ENCODE measurements at regions of chr12 and their contacts with region 1.

Region 1: DNA sequence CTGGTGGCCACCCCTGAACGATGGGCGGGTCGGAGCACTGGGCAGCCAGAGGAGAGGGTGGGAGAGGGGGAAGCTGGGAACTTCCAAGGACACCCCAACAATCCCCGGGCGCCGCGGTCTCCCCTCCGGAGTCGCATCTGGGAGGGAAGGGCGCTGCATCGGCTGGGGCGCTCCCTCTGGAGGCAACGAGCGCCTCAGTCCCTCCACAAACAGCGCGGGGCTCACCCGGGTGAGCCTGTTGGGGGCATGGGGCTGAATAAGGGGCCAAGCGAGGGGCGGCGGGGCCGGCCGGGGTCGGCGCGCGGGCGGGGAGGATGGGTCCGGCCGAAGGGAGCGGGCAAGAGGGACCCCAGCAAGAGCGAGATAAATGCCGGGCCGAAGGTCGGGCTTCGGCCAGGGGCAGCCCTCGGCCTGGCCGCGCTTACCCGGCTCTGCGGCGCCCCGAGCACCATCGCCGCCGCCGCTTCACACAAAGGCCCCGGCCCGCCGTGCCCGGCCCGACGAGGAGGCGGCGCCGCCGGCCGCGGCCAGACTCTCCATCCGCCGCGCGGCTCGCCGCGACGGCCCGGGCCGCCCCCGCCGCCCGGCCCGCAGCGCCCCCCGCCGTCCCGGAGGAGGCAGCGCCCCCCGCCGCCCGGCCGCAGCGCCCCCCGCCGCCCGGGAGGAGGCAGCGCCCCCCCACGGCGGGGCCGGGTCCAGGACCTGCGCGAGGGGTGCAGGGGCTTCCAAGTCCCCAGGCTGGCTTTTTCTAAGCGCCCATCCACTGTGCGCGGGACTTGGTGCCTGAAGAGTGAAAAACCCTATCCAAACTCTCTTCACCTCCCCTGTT is at the start of gene ZBTB39:
- DNase-seq: peak; percentile 55
- H3K4me3 Mint-ChIP-seq: peak within 1 kb of the TSS; percentile 90
- H3K27ac Mint-ChIP-seq: peak within 1 kb of the TSS; percentile 87
- H3K4me1 Mint-ChIP-seq: peaks cover 61% of the 10 kb centered on the region
- H3K27me3 Mint-ChIP-seq: no peaks in the 10 kb centered on the region
- total RNA-seq, gene ZBTB39: 8.8 to 9.5 TPM

Region 2: GRCh38 chr12:56751712-56752598 is 254.2 kb before region 1 on chr12 and contains the start of gene PRIM1:
- CTCF ChIA-PET with region 1: interaction called, 11 read pairs
- POLR2A ChIA-PET with region 1: no interaction called
- DNase-seq: peak; percentile 88
- H3K4me3 Mint-ChIP-seq: peak within 1 kb of the TSS; percentile 98
- H3K27ac Mint-ChIP-seq: peak within 1 kb of the TSS; percentile 99
- H3K4me1 Mint-ChIP-seq: peaks cover 54% of the 10 kb centered on the region
- H3K27me3 Mint-ChIP-seq: no peaks in the 10 kb centered on the region
- total RNA-seq, gene PRIM1: 48.0 to 52.9 TPM

Region 3: GRCh38 chr12:57063991-57064685 is 57.9 kb after region 1 on chr12:
- CTCF ChIA-PET with region 1: interaction called, 18 read pairs
- POLR2A ChIA-PET with region 1: no interaction called
- DNase-seq: peak; percentile 78
- H3K4me3 Mint-ChIP-seq: peak overlapping the region; percentile 73
- H3K27ac Mint-ChIP-seq: peak overlapping the region; percentile 96
- H3K4me1 Mint-ChIP-seq: peaks cover 42% of the 10 kb centered on the region
- H3K27me3 Mint-ChIP-seq: no peaks in the 10 kb centered on the region